Endothelial cell of umbilical vein (primary cell): ENCODE measurements at regions of chr3 and their contacts with region 1.

Region 1: DNA sequence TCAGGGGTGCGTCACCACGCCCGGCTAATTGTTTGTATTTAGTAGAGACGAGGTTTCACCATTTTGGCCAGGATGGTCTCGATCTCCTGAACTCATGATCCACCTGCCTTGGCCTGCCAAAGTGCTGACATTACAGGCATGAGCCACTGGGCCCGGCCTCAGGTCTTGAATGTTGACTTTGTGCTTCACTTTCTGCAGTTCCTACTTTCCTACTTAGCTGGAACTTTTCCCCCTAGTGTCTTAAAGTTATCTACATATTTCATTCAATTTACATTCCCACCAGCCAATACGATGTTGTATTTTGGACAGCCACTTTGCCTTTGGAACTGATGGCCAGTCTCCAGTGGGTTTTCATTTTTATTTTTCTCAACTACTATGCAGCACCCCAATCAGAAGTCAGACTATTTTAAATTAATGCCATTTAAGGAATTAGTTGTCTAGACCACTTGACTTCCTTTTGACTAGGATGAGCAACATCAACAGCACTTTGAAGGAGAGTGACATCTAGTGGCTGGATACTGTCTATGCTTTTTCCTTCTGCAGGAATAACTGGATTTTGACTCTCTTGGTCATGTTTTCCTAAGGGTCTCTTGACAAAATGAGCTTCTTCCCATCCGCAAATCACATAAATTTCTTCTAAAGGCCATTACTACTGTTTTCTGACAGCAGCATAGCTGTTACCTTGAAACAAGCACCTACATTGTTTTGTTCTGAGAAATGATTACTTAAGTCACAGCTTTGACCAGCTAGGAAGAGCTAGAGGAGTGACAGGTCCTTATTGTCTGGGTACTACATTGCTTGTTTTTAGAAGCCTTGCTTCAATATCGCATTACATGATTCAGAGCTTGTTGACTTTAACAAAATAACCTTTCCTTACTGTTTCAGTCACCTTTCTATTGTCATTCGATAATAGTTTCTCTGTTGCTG is 140.2 kb downstream of the ITPR1 start:
- DNase-seq: peak; percentile 72
- H3K4me3 ChIP-seq: no peak overlapping the region
- H3K27ac ChIP-seq: no peak overlapping the region
- H3K4me1 ChIP-seq: no peaks in the 10 kb centered on the region
- H3K27me3 ChIP-seq: no peaks in the 10 kb centered on the region
- CTCF ChIP-seq: peak; percentile 67 to 69
- POLR2A ChIP-seq: no peak

Region 2: GRCh38 chr3:3038201-3038991 is 1594.9 kb before region 1 on chr3:
- CTCF ChIA-PET with region 1: no interaction called
- POLR2A ChIA-PET with region 1: no interaction called
- dilution Hi-C with region 1: no loop called
- intact Hi-C with region 1: loop called (anchors 5 kb)
- DNase-seq: no peak
- H3K4me3 ChIP-seq: no peak overlapping the region
- H3K27ac ChIP-seq: no peak overlapping the region
- H3K4me1 ChIP-seq: no peaks in the 10 kb centered on the region
- H3K27me3 ChIP-seq: no peaks in the 10 kb centered on the region
- CTCF ChIP-seq: no peak
- POLR2A ChIP-seq: no peak

Region 3: DNA sequence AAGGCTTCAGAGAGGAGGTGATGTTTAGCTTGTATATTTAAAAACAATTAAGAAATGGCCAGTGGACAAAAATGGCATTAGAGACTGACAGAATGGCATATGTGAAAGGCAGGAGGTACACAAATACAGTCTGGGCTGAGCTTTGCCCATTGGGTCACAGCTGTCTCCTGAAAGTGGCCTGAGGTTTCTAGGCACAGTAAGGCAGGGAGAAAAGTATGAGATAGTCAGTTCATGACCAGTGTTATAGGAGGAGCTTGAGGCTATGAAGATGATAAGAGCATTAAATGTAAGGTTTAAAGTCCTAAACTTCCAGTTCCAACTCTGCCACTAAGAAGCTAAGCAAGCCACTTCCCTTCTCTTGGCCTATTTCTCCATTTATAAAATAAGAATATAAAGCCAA is 441.4 kb before region 1 on chr3:
- CTCF ChIA-PET with region 1: no interaction called
- POLR2A ChIA-PET with region 1: no interaction called
- dilution Hi-C with region 1: no loop called
- intact Hi-C with region 1: no loop called
- DNase-seq: no peak
- H3K4me3 ChIP-seq: no peak overlapping the region
- H3K27ac ChIP-seq: no peak overlapping the region
- H3K4me1 ChIP-seq: no peaks in the 10 kb centered on the region
- H3K27me3 ChIP-seq: no peaks in the 10 kb centered on the region
- CTCF ChIP-seq: no peak
- POLR2A ChIP-seq: no peak

Region 4: GRCh38 chr3:4303187-4304123 is 329.9 kb before region 1 on chr3 and contains the start of gene SETMAR:
- CTCF ChIA-PET with region 1: interaction called, 7 read pairs
- POLR2A ChIA-PET with region 1: no interaction called
- dilution Hi-C with region 1: no loop called
- intact Hi-C with region 1: loop called (anchors 1 kb)
- DNase-seq: peak; percentile 85
- H3K4me3 ChIP-seq: peak within 1 kb of the TSS; percentile 57 to 74 (median 59)
- H3K27ac ChIP-seq: peak within 1 kb of the TSS; percentile 81
- H3K4me1 ChIP-seq: peaks cover 9% of the 10 kb centered on the region
- H3K27me3 ChIP-seq: no peaks in the 10 kb centered on the region
- CTCF ChIP-seq: no peak
- POLR2A ChIP-seq: peak; percentile 82
- total RNA-seq, gene SETMAR: 15.4 and 15.9 TPM in 2 replicates

Region 5: GRCh38 chr3:4314688-4315087 is 318.7 kb before region 1 on chr3:
- CTCF ChIA-PET with region 1: interaction called, 12 read pairs
- POLR2A ChIA-PET with region 1: no interaction called
- dilution Hi-C with region 1: no loop called
- intact Hi-C with region 1: loop called (anchors 1 kb)
- DNase-seq: no peak
- H3K4me3 ChIP-seq: no peak overlapping the region
- H3K27ac ChIP-seq: no peak overlapping the region
- H3K4me1 ChIP-seq: peaks cover 14% of the 10 kb centered on the region
- H3K27me3 ChIP-seq: no peaks in the 10 kb centered on the region
- CTCF ChIP-seq: peak; percentile 8 to 11
- POLR2A ChIP-seq: no peak

Region 6: DNA sequence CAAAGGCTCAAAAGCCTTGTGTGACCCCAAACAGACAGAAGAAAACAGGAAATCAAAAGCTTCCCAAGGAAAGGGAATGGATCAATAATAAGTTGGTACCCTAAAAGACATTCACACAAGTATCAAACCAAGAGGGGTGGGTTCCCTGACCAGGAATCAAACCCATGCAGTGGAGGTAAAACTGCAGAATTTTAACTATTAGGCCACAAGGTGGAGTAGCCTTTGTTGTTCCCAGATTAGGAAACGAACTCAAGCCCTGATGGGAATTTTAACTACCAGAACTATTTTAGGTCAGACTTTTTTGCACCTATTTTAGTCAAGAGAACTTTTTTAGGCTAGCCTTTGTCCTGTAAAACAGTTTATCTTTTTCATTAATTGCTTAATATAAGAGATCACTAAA is 298.8 kb before region 1 on chr3:
- CTCF ChIA-PET with region 1: interaction called, 23 read pairs
- POLR2A ChIA-PET with region 1: no interaction called
- dilution Hi-C with region 1: no loop called
- intact Hi-C with region 1: loop called (anchors 1 kb)
- DNase-seq: no peak
- H3K4me3 ChIP-seq: no peak overlapping the region
- H3K27ac ChIP-seq: no peak overlapping the region
- H3K4me1 ChIP-seq: no peaks in the 10 kb centered on the region
- H3K27me3 ChIP-seq: no peaks in the 10 kb centered on the region
- CTCF ChIP-seq: no peak
- POLR2A ChIP-seq: no peak

Region 7: DNA sequence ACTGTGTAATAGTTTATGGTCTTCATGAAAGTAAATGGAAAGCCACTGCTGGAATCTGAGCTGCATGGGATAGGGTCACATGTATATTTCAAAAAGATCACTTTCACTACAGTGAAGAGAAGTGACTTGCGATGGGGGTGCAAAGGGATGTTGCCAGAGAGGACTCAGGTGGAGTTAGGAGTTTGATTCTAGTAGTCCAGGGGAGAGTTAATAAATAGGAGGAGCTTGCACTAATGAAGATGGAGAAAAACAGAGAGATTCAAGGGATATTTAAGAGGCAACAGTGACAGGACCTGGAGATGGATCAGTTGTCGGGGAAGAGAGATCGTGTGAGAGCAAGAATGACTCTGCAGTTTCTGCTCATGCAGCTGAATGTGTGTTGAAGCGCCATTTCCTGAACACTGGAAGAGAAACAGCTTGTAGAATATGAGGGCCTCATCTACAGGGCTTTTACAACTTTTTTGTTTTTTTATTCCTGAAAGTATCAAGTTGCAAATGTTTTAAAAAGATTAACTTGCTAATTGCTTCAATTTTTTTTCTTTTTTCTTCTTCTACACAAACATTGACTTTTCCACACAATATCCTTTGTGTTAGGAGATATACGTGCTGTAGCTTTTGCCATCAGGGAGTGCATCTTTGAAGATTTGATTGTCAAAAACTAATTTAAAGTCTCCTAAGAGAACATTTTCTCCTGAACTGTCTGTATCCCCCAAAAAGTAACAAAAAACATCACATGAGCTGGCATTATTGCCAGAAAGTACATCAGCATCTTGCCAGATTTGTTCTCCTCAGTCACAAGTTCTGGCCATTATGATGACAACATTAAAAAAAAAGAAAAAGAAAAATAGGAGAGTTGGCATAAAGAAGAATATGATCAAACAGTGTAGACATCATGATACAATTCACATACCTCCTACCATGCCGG is 292.7 kb before region 1 on chr3:
- CTCF ChIA-PET with region 1: interaction called, 13 read pairs
- POLR2A ChIA-PET with region 1: no interaction called
- dilution Hi-C with region 1: no loop called
- intact Hi-C with region 1: no loop called
- DNase-seq: peak; percentile 28
- H3K4me3 ChIP-seq: no peak overlapping the region
- H3K27ac ChIP-seq: no peak overlapping the region
- H3K4me1 ChIP-seq: no peaks in the 10 kb centered on the region
- H3K27me3 ChIP-seq: no peaks in the 10 kb centered on the region
- CTCF ChIP-seq: no peak
- POLR2A ChIP-seq: no peak

Region 8: DNA sequence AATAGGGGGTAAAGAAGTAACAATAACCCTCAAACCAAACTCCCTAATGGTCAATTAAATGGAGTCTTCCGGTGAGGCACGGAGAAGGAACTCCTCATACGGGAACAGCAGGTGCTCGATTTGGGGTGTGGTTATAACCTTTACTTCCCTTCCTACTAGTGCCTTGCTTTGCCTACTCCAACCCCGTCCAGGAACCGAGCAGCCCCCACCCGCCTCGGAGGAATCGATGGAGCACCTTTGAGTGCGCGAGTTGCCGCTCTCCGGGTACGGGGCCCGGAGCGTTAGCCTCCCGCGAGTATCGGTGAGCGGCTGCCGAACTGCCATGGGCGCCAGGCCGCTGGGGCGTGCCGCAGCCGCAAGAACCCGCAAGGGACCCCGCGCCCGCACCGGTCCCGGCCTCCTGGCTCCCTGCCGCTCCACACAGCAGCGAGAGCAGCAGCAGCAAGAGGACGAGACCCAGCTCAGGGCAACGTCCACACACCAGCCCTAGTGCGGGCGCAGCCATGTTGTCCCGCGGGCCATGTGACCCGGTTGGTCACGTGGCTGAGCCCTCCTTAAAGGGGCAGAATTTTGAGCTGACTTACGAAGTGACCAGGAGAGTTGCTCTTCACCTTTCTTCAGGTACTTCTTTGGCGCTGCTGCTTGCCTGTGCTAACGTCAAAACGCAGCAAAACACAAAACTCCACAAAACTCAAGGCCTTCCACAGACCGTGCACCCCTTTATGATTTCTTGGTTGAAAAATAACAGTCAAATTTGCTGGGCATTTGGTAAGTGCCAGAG is 166.4 kb before region 1 on chr3 and contains the start of gene SUMF1:
- CTCF ChIA-PET with region 1: interaction called, 10 read pairs
- POLR2A ChIA-PET with region 1: no interaction called
- dilution Hi-C with region 1: no loop called
- intact Hi-C with region 1: loop called (anchors 5 kb)
- DNase-seq: peak; percentile 80
- H3K4me3 ChIP-seq: peak within 1 kb of the TSS; percentile 56 to 86 (median 83)
- H3K27ac ChIP-seq: peak within 1 kb of the TSS; percentile 51
- H3K4me1 ChIP-seq: peaks cover 4% of the 10 kb centered on the region
- H3K27me3 ChIP-seq: peaks cover 0 to 3% of the 10 kb centered on the region in 2 experiments
- CTCF ChIP-seq: no peak
- POLR2A ChIP-seq: peak; percentile 85
- total RNA-seq, gene SUMF1: 26.6 and 31.5 TPM in 2 replicates

Region 9: GRCh38 chr3:4776980-4777581 is 143.7 kb after region 1 on chr3:
- CTCF ChIA-PET with region 1: no interaction called
- POLR2A ChIA-PET with region 1: no interaction called
- dilution Hi-C with region 1: no loop called
- intact Hi-C with region 1: no loop called
- DNase-seq: peak; percentile 54
- H3K4me3 ChIP-seq: no peak overlapping the region
- H3K27ac ChIP-seq: no peak overlapping the region
- H3K4me1 ChIP-seq: peaks cover 4% of the 10 kb centered on the region
- H3K27me3 ChIP-seq: no peaks in the 10 kb centered on the region
- CTCF ChIP-seq: no peak
- POLR2A ChIP-seq: no peak

Region 10: GRCh38 chr3:4928277-4928789 is 295.0 kb after region 1 on chr3:
- CTCF ChIA-PET with region 1: no interaction called
- POLR2A ChIA-PET with region 1: no interaction called
- dilution Hi-C with region 1: no loop called
- intact Hi-C with region 1: no loop called
- DNase-seq: no peak
- H3K4me3 ChIP-seq: no peak overlapping the region
- H3K27ac ChIP-seq: no peak overlapping the region
- H3K4me1 ChIP-seq: no peaks in the 10 kb centered on the region
- H3K27me3 ChIP-seq: no peaks in the 10 kb centered on the region
- CTCF ChIP-seq: no peak
- POLR2A ChIP-seq: no peak

Region 11: GRCh38 chr3:5092018-5092417 is 458.7 kb after region 1 on chr3:
- CTCF ChIA-PET with region 1: no interaction called
- POLR2A ChIA-PET with region 1: no interaction called
- dilution Hi-C with region 1: no loop called
- intact Hi-C with region 1: no loop called
- DNase-seq: no peak
- H3K4me3 ChIP-seq: no peak overlapping the region
- H3K27ac ChIP-seq: no peak overlapping the region
- H3K4me1 ChIP-seq: no peaks in the 10 kb centered on the region
- H3K27me3 ChIP-seq: peaks cover 0 to 3% of the 10 kb centered on the region in 2 experiments
- CTCF ChIP-seq: no peak
- POLR2A ChIP-seq: no peak